HepG2 (cell line): ENCODE measurements at regions of chr12 and their contacts with region 1.

Region 1: GRCh38 chr12:117236456-117237001 is 46.3 kb upstream of the FBXO21 start:
- DNase-seq: peak; percentile 39
- ATAC-seq: peak; percentile 84
- H3K4me3 ChIP-seq: no peak overlapping the region
- H3K27ac ChIP-seq: no peak overlapping the region
- H3K4me1 ChIP-seq: no peaks in the 10 kb centered on the region
- H3K27me3 ChIP-seq: peaks cover 1 to 17% of the 10 kb centered on the region in 2 experiments; a peak in 4 of 5 replicates
- CTCF ChIP-seq: peak; percentile 66
- EP300 ChIP-seq: no peak
- POLR2A ChIP-seq: no peak
- RAD21 ChIP-seq: 0 out of 2 replicates have a peak, but pooled peaks have one; percentile 32

Region 2: DNA sequence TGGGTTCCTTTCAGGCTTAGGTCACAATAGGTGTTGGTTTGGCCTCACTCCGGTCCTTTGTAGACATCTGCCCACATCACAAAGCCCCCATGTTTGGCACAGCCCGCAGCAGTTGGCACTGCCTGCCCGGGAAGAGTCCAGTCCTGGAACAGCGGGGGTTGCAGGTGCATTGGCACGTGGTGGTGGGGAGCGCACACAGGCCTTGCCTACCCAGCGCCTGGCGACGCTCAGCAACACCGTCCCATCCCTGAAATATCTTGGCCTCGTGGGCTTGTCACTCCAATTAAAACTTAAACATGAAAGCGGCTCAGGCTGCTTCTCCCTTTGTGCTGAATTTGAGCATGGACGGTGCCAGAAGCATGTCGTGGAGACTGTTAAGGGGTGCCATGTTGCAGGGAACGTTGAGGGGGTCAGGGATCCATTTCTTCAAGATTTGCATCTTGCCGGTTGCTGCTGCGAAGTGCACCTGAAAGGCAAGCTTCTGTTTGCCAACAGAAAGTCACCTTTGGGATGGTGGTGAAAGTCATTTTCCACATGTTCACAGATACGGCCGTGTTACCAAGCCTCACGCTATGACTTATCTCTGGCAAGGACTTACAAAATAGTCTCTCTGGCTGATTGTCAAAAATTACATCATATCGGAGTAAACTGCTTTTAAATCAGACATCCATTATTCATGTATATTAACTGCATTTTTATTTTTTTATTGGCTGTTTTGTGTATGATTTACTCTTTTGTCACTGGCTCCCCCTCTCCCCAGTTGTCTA is 234.3 kb before region 1 on chr12:
- CTCF ChIA-PET with region 1: no interaction called
- POLR2A ChIA-PET with region 1: no interaction called
- in situ Hi-C with region 1: no loop called
- intact Hi-C with region 1: no loop called
- DNase-seq: no peak
- ATAC-seq: no peak
- H3K4me3 ChIP-seq: no peak overlapping the region
- H3K27ac ChIP-seq: no peak overlapping the region
- H3K4me1 ChIP-seq: no peaks in the 10 kb centered on the region
- H3K27me3 ChIP-seq: no peaks in the 10 kb centered on the region
- CTCF ChIP-seq: no peak
- EP300 ChIP-seq: no peak
- POLR2A ChIP-seq: no peak
- RAD21 ChIP-seq: no peak

Region 3: DNA sequence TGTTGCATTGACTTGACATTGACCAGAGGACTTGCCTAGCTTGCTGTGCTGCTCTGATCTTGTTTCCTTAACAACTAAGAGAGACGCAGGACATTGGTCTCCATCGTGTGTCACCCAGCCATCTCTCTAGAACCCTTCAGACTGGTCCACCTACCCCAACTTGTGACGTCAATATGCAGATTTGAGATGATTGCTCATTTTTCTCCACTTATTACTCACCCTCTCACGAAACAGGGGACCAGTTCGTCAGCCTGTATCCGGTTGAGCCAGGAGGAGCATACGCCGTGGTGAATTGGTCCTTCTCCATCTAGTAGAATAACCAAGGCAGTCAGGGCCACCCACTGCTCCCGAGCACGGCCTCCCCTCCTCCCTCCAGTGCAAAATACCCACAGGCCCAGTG is 10.1 kb before region 1 on chr12:
- CTCF ChIA-PET with region 1: no interaction called
- POLR2A ChIA-PET with region 1: no interaction called
- in situ Hi-C with region 1: no loop called
- intact Hi-C with region 1: no loop called
- DNase-seq: no peak
- ATAC-seq: no peak
- H3K4me3 ChIP-seq: no peak overlapping the region
- H3K27ac ChIP-seq: no peak overlapping the region
- H3K4me1 ChIP-seq: no peaks in the 10 kb centered on the region
- H3K27me3 ChIP-seq: peaks cover 3 to 11% of the 10 kb centered on the region in 2 experiments; a peak in 2 of 5 replicates
- CTCF ChIP-seq: no peak
- EP300 ChIP-seq: no peak
- POLR2A ChIP-seq: no peak
- RAD21 ChIP-seq: no peak

Region 4: GRCh38 chr12:117587631-117588287 is 351.2 kb after region 1 on chr12:
- CTCF ChIA-PET with region 1: no interaction called
- POLR2A ChIA-PET with region 1: no interaction called
- in situ Hi-C with region 1: loop called (anchors 10 kb)
- intact Hi-C with region 1: loop called (anchors 5 kb)
- DNase-seq: peak; percentile 15
- ATAC-seq: peak; percentile 82
- H3K4me3 ChIP-seq: no peak overlapping the region
- H3K27ac ChIP-seq: no peak overlapping the region
- H3K4me1 ChIP-seq: no peaks in the 10 kb centered on the region
- H3K27me3 ChIP-seq: peaks cover 0 to under 1% of the 10 kb centered on the region in 2 experiments; a peak in 2 of 5 replicates
- CTCF ChIP-seq: peak; percentile 80
- EP300 ChIP-seq: no peak
- POLR2A ChIP-seq: no peak
- RAD21 ChIP-seq: peak; percentile 68

Region 5: DNA sequence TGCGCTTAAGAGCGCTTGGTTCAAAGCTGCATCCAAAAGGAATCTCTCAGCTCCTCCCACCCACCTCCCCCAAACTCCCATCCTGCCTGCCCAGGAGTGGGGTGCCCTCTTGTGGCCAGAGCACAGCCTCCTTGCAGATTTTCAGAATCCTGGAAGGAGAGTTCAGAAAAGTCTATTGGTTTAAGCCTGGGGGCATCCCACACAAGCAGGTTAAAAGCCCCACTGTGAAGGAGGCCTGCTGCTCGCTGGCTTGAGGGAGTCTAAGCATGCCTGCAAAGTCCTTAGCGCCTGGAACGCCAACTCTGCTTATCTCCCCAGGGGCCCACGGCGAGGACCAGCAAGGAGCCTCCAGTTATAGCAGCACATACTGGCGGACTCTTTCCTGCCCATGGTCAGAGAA is 435.2 kb after region 1 on chr12:
- CTCF ChIA-PET with region 1: no interaction called
- POLR2A ChIA-PET with region 1: no interaction called
- in situ Hi-C with region 1: no loop called
- intact Hi-C with region 1: loop called (anchors 10 kb)
- DNase-seq: peak; percentile 5
- ATAC-seq: no peak; the same call in 2 of the 3 replicates
- H3K4me3 ChIP-seq: no peak overlapping the region
- H3K27ac ChIP-seq: no peak overlapping the region
- H3K4me1 ChIP-seq: no peaks in the 10 kb centered on the region
- H3K27me3 ChIP-seq: peaks cover 3 to 9% of the 10 kb centered on the region in 2 experiments; a peak in 2 of 5 replicates
- CTCF ChIP-seq: peak; percentile 57
- EP300 ChIP-seq: no peak
- POLR2A ChIP-seq: no peak
- RAD21 ChIP-seq: no peak

Region 6: DNA sequence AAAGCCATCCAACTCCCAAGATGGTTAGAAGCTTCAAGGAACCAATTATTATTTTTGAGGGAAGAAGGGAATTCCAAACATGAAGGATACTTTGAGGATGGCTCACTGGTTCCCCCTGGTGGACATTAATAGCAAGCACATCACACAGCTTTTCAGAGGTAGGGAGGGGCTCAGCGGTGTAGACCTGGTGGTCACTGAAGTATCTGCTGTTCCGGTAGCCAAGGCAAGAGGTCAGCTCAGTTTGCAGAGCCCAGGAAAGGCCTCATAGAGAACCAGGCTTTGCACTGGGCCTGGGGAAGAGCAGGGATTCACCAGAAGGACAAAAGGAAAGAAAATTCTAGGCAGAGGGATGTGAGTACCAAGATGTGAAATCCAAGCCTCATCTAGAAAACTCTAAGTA is 613.5 kb after region 1 on chr12:
- CTCF ChIA-PET with region 1: no interaction called
- POLR2A ChIA-PET with region 1: no interaction called
- in situ Hi-C with region 1: loop called (anchors 10 kb)
- intact Hi-C with region 1: loop called (anchors 5 kb)
- DNase-seq: peak; percentile 63
- ATAC-seq: peak; percentile 87
- H3K4me3 ChIP-seq: no peak overlapping the region
- H3K27ac ChIP-seq: no peak overlapping the region
- H3K4me1 ChIP-seq: peaks cover 15% of the 10 kb centered on the region
- H3K27me3 ChIP-seq: no peaks in the 10 kb centered on the region
- CTCF ChIP-seq: peak; percentile 69
- EP300 ChIP-seq: no peak
- POLR2A ChIP-seq: no peak
- RAD21 ChIP-seq: peak; percentile 13; the same call in 1 of the 2 replicates